AG04450 (cell line): ENCODE measurements at regions of chr7 and their contacts with region 1.

Region 1: DNA sequence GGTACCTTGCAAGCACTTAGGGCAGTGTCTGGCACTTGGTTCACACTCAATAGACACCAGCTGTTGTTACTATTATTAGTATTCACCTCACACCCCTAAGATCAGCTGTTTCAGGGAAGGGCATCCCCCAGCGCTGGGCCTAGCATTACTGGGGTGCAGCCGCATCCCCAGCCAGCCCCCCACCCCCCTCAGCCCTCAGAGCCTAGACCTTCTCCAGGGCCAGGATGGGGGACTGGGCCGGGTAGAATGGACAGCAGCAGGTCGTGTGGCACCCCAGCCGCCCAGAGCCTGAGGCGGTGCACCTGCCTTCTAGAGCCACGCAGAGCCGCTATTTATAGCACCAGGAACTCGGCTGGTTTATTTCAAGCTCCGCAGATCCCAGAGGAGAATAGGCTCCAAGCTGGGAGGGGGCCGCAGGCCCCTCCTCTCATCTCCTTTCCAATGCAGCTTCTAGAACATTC is 60.5 kb downstream of the GTF2IRD1 start:
- DNase-seq: no peak
- H3K4me3 ChIP-seq: no peak overlapping the region
- H3K27ac ChIP-seq: no peak overlapping the region
- H3K27me3 ChIP-seq: no peaks in the 10 kb centered on the region
- CTCF ChIP-seq: no peak

Region 2: GRCh38 chr7:74324531-74325209 is 189.5 kb before region 1 on chr7:
- CTCF ChIA-PET with region 1: interaction called, 10 read pairs
- POLR2A ChIA-PET with region 1: no interaction called
- DNase-seq: no peak
- H3K4me3 ChIP-seq: no peak overlapping the region
- H3K27ac ChIP-seq: no peak overlapping the region
- H3K27me3 ChIP-seq: no peaks in the 10 kb centered on the region
- CTCF ChIP-seq: no peak

Region 3: GRCh38 chr7:74502181-74502891 is 11.8 kb before region 1 on chr7:
- CTCF ChIA-PET with region 1: no interaction called
- POLR2A ChIA-PET with region 1: no interaction called
- DNase-seq: no peak
- H3K4me3 ChIP-seq: no peak overlapping the region
- H3K27ac ChIP-seq: no peak overlapping the region
- H3K27me3 ChIP-seq: no peaks in the 10 kb centered on the region
- CTCF ChIP-seq: no peak

Region 4: DNA sequence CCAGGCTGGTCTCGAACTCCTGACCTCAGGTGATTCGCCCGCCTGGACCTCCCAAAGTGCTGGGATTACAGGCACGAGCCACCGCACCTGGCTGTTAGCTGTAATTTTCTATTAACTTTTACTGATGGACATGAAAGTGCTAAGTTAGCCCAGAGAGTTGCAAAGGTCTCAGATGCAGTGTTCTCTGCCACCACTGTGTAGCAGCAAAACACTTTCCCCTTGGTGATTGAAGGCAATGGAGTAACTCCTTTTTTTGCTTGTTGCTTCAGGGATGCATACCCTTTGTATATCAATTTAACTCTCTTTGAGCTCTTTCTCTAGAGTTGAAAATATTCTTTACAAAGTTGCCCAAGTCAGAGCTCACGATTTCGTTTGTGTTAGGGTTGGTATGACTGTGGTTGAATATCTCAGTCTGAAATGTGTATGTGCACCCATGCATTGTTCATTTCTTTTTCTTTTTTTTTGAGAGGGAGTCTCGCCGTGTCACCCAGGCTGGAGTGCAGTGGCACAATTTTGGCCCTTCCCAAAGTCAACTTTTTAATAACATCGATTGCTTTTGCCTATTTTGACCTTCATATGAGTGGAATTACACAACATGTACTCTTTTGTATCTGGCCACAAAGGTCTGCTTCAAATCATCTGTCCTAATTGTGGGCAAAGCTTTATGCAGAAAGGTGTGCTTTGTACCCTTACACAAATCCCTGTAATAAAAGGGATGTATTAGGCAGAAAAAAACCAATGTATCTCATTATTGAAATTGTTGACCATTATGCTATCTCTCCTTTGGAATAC is 195.9 kb after region 1 on chr7:
- CTCF ChIA-PET with region 1: no interaction called
- POLR2A ChIA-PET with region 1: no interaction called
- DNase-seq: no peak
- H3K4me3 ChIP-seq: no peak overlapping the region
- H3K27ac ChIP-seq: no peak overlapping the region
- H3K27me3 ChIP-seq: no peaks in the 10 kb centered on the region
- CTCF ChIP-seq: peak; percentile 45